MCF 10A (cell line): ENCODE measurements at regions of chr1 and their contacts with region 1.

Region 1: GRCh38 chr1:156129706-156130581 is 15.4 kb downstream of the LMNA start:
- DNase-seq: peak; percentile 99
- H3K4me3 Mint-ChIP-seq: peak overlapping the region; percentile 60
- H3K27ac Mint-ChIP-seq: peak overlapping the region; percentile 96
- H3K4me1 Mint-ChIP-seq: peaks cover 50% of the 10 kb centered on the region
- H3K27me3 Mint-ChIP-seq: no peaks in the 10 kb centered on the region
- CTCF ChIP-seq: peak; percentile 100

Region 2: DNA sequence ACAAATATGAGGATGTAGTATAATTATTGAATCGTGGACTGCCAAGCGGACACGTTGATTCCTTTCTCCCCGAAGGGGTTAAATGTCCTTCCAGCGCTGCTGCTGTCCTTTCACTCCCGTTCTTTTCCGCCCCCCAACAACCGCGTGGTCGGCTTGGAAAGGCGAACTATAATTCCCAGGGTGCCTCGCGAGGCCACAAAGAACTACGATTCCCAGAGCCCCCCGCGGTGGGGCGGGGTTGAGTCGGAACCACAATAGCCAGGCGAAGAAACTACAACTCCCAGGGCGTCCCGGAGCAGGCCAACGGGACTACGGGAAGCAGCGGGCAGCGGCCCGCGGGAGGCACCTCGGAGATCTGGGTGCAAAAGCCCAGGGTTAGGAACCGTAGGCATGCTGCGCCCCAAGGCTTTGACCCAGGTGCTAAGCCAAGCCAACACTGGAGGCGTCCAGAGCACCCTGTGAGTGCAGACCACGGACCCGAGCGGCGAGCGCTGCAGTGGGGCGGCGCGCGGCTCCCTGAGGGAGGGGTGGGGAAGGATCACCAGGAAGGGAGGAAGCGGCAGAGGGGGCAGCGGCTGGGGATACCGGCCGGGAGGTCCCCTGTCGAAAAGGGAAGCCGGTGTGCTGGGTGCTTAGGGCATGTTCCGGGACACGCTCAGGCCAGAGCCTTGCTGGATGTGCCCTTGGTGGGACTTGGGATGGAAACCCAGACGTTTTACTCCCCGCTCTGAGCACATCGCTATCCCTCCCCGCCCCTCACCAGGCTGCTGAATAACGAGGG is 75.3 kb before region 1 on chr1 and contains the start of gene LAMTOR2:
- CTCF ChIA-PET with region 1: interaction called, 4 read pairs
- POLR2A ChIA-PET with region 1: interaction called, 10 read pairs
- intact Hi-C with region 1: no loop called
- DNase-seq: peak; percentile 100
- H3K4me3 Mint-ChIP-seq: peak within 1 kb of the TSS; percentile 99
- H3K27ac Mint-ChIP-seq: peak within 1 kb of the TSS; percentile 95
- H3K4me1 Mint-ChIP-seq: peaks cover 33% of the 10 kb centered on the region
- H3K27me3 Mint-ChIP-seq: no peaks in the 10 kb centered on the region
- CTCF ChIP-seq: no peak
- total RNA-seq, gene LAMTOR2: 88.1 and 104 TPM in 2 replicates

Region 3: GRCh38 chr1:156104065-156104810 is 25.7 kb before region 1 on chr1:
- CTCF ChIA-PET with region 1: interaction called, 1,892 read pairs
- POLR2A ChIA-PET with region 1: interaction called, 960 read pairs
- intact Hi-C with region 1: loop called (anchors 1 kb)
- DNase-seq: peak; percentile 94
- H3K4me3 Mint-ChIP-seq: peak overlapping the region; percentile 9
- H3K27ac Mint-ChIP-seq: peak overlapping the region; percentile 91
- H3K4me1 Mint-ChIP-seq: peaks cover 73% of the 10 kb centered on the region
- H3K27me3 Mint-ChIP-seq: no peaks in the 10 kb centered on the region
- CTCF ChIP-seq: no peak

Region 4: GRCh38 chr1:156146020-156146768 is 16.2 kb after region 1 on chr1:
- CTCF ChIA-PET with region 1: interaction called, 126 read pairs
- POLR2A ChIA-PET with region 1: interaction called, 25 read pairs
- intact Hi-C with region 1: no loop called
- DNase-seq: peak; percentile 97
- H3K4me3 Mint-ChIP-seq: peak overlapping the region; percentile 24
- H3K27ac Mint-ChIP-seq: no peak overlapping the region
- H3K4me1 Mint-ChIP-seq: peaks cover 29% of the 10 kb centered on the region
- H3K27me3 Mint-ChIP-seq: no peaks in the 10 kb centered on the region
- CTCF ChIP-seq: peak; percentile 60

Region 5: DNA sequence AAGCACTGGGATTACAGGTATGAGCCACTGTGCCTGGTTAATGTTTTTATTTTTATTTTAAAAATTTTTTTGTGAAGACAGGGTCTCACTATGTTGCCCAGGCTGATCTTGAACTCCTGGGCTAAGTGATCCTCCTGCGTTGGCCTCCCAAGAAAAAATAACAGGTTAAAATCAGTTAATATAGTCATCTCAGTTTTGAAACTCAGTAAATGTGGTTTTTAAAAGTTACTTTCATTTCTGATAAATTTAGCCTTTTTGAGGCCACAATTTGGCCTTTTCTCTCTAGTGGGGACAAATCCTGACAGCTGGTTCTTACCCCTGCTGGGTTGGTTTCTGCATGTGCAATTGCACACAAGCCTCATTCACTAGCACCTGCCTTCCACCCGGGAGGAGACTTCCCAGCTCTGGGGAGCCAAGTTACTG is 96.2 kb after region 1 on chr1:
- CTCF ChIA-PET with region 1: interaction called, 80 read pairs
- POLR2A ChIA-PET with region 1: interaction called, 3 read pairs
- intact Hi-C with region 1: loop called (anchors 1 kb)
- DNase-seq: no peak
- H3K4me3 Mint-ChIP-seq: no peak overlapping the region
- H3K27ac Mint-ChIP-seq: no peak overlapping the region
- H3K4me1 Mint-ChIP-seq: peaks cover 24% of the 10 kb centered on the region
- H3K27me3 Mint-ChIP-seq: no peaks in the 10 kb centered on the region
- CTCF ChIP-seq: no peak